A673 (cell line): ENCODE measurements at regions of chr15 and their contacts with region 1.

Region 1: DNA sequence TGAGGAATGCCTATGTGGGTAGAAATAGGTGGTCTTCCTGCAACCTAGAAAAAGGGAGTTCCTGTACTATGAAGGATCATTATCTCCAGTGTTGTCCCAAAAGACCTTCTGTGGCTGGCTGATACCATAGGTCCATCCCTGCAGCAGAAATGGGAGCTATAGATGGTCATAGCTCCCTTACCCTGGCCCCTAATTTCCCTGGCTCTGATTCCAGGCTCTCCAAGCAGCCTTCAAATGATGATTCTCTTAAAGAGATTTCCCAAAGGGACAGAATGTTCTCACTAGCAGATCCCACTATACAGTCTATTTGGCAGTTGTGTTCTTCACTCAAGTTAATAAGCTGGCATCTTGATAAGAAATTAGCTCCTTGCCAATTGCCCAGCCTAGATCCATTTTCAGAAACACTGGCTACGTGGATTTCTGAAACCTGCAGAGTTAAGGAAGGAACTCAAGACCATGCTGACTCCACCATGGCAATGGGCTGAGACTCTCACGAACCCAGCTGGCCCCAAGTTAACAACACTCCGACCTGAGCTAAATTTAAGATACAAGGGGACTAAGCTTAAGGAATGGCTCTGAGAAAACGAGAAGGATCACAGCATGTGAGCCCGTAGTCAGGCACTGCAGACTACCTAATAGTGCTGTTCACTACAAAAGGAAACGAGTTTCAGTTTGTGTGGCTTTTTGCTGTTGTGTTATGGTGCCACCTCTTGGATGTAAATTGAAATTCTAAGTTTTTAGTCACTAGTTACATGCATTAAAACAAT is 11.4 kb downstream of the C15orf40 start:
- DNase-seq: peak; percentile 79
- H3K4me3 ChIP-seq: peak overlapping the region; percentile 42
- H3K27ac ChIP-seq: no peak overlapping the region
- H3K4me1 ChIP-seq: peaks cover 3% of the 10 kb centered on the region
- H3K27me3 ChIP-seq: no peaks in the 10 kb centered on the region
- CTCF ChIP-seq: peak; percentile 68

Region 2: DNA sequence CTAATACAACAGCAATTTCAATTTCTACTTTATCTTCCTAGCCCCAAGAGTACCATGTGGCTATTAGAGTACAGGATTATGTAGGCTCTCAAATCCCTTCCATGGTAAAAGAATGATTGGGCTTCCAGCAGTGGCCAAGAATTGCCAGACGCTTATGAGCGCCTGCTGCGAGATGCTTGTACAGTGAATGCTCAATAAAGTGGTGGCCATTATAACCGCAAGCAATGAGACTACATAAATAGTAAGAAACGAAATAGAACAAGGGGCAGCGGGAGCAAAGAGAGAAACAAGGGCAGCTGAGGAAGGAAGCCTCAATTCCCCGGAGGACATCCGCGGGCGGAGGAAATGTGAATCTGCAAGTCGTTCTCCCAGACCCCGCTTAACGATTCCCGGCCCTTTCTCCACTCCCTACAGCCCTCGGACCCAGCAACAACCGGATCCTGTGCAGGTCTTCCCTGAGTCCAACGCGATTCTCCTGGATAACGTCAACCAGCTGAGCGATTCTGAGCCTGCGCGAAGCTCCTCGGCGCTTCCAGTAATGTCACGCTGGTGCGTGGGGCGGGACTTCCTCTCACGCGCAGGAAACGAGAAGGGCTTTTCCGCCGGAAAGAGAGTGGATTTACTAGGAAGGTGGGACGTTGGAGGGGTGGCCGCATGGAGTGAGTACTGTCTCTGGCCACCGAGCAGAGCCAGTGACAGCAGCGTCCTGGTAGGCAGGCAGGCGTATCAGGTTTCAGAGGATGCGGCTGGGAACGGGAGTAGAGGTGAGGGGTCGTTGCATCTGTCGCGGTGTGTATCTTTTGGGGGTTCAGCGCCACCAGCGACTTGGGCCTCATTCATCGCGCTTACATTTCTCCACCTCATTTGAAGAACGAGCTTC is 249.9 kb before region 1 on chr15:
- CTCF ChIA-PET with region 1: interaction called, 3 read pairs
- POLR2A ChIA-PET with region 1: no interaction called
- intact Hi-C with region 1: loop called (anchors 5 kb)
- DNase-seq: peak; percentile 96
- H3K4me3 ChIP-seq: peak overlapping the region; percentile 82
- H3K27ac ChIP-seq: peak overlapping the region; percentile 78
- H3K4me1 ChIP-seq: peaks cover 10% of the 10 kb centered on the region
- H3K27me3 ChIP-seq: no peaks in the 10 kb centered on the region
- CTCF ChIP-seq: no peak

Region 3: DNA sequence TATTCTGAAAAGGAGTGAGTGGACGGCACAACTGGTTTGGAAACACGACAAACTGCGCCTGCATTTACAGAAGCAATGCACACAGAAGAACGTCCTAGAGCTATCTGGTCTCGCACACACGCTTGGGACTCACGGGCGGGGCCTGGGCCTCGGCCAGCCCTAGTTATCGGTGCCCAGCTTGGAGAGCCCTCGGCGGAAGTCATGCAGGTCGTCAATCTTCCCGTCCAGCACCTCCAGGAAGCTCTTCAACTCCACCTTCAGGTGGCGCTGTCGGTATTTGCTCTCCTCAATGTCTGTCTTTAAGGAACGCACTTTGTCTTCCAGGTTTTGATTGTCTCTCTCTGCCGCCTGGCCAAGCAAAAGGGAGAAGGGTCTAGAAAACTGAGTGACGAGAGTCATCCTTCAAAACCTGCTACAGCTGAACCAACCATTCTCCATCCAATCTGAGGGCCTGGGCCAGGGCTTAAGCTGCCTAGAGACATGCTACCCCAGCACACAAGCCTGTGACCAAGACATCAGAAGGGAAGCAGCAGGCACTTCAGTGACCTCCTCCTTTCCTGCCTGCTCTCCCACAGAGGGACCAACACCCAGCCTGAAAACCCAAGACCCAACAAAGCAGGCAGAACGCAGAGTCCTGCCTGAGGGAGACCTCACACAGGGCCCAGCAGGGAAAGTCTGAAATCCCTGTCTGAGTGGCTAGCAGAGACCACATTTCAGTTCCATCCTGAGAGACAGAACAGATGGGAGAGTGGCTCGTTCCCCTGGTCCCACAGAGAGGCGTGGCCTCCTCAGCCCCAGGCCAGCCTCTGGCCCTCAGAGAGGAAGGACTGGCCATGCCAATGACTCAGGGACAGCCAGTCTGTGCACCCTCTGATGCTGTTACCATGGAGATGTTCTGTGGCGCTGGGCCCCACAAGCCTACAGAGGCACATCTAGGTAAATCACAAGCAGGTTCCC is 150.3 kb before region 1 on chr15:
- CTCF ChIA-PET with region 1: interaction called, 4 read pairs
- POLR2A ChIA-PET with region 1: no interaction called
- intact Hi-C with region 1: loop called (anchors 1 kb)
- DNase-seq: peak; percentile 85
- H3K4me3 ChIP-seq: no peak overlapping the region
- H3K27ac ChIP-seq: no peak overlapping the region
- H3K4me1 ChIP-seq: peaks cover 18% of the 10 kb centered on the region
- H3K27me3 ChIP-seq: no peaks in the 10 kb centered on the region
- CTCF ChIP-seq: peak; percentile 82